ENCODE measurements at regions of chr11 and their contacts with region 1.

Region 1: GRCh38 chr11:31641477-31642062 is 132.0 kb downstream of the ELP4 start:
- DNase-seq: no peak
- H3K4me3 ChIP-seq: no peak overlapping the region
- H3K27ac ChIP-seq: no peak overlapping the region
- H3K4me1 ChIP-seq: peaks cover 14% of the 10 kb centered on the region
- H3K27me3 ChIP-seq: no peaks in the 10 kb centered on the region
- CTCF ChIP-seq: peak; percentile 71 to 76

Region 2: GRCh38 chr11:30830681-30831080 is 810.9 kb before region 1 on chr11:
- CTCF ChIA-PET with region 1: no interaction called
- dilution Hi-C with region 1: no loop called
- in situ Hi-C with region 1: no loop called
- intact Hi-C with region 1: no loop called
- DNase-seq: no peak
- H3K4me3 ChIP-seq: no peak overlapping the region
- H3K27ac ChIP-seq: no peak overlapping the region
- H3K4me1 ChIP-seq: no peaks in the 10 kb centered on the region
- H3K27me3 ChIP-seq: no peaks in the 10 kb centered on the region
- CTCF ChIP-seq: no peak

Region 3: GRCh38 chr11:31240338-31240904 is 401.1 kb before region 1 on chr11:
- CTCF ChIA-PET with region 1: no interaction called
- dilution Hi-C with region 1: no loop called
- in situ Hi-C with region 1: no loop called
- intact Hi-C with region 1: loop called (anchors 10 kb)
- DNase-seq: peak; percentile 29
- H3K4me3 ChIP-seq: no peak overlapping the region
- H3K27ac ChIP-seq: no peak overlapping the region
- H3K4me1 ChIP-seq: no peaks in the 10 kb centered on the region
- H3K27me3 ChIP-seq: no peaks in the 10 kb centered on the region
- CTCF ChIP-seq: peak; percentile 61 to 72

Region 4: GRCh38 chr11:31509429-31510345 is 131.9 kb before region 1 on chr11 and contains the starts of genes ELP4 and IMMP1L:
- CTCF ChIA-PET with region 1: no interaction called
- dilution Hi-C with region 1: no loop called
- in situ Hi-C with region 1: no loop called
- intact Hi-C with region 1: loop called (anchors 5 kb)
- DNase-seq: peak; percentile 95
- H3K4me3 ChIP-seq: peak within 1 kb of the TSS; percentile 89 to 96 (median 94)
- H3K27ac ChIP-seq: peak within 1 kb of the TSS; percentile 82
- H3K4me1 ChIP-seq: peaks cover 10% of the 10 kb centered on the region
- H3K27me3 ChIP-seq: no peaks in the 10 kb centered on the region
- CTCF ChIP-seq: no peak
- total RNA-seq, gene ELP4: 17.6 to 21.7 TPM
- total RNA-seq, gene IMMP1L: 17.2 to 22.1 TPM

Region 5: DNA sequence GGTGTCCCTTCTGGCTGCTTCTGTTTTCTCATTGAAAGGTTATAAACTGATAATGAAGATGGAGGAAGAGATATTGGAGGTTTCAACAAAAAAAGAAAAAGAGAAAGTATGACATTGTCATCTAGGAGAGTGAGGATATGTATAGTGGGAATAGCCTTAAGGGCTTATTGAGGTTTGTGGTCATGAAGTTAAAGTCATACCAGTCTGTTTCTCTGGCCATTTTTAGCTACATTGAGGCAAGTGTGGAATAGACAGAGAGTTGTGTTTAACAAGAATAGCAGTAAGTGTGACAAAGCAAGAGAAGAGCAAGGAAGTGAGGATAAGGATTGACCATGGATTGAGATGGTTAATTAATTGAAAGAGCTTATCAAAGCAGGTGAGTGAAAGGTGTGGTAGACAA is 21.6 kb before region 1 on chr11:
- CTCF ChIA-PET with region 1: no interaction called
- dilution Hi-C with region 1: no loop called
- in situ Hi-C with region 1: no loop called
- intact Hi-C with region 1: no loop called
- DNase-seq: no peak
- H3K4me3 ChIP-seq: no peak overlapping the region
- H3K27ac ChIP-seq: no peak overlapping the region
- H3K4me1 ChIP-seq: no peaks in the 10 kb centered on the region
- H3K27me3 ChIP-seq: no peaks in the 10 kb centered on the region
- CTCF ChIP-seq: no peak

Region 6: DNA sequence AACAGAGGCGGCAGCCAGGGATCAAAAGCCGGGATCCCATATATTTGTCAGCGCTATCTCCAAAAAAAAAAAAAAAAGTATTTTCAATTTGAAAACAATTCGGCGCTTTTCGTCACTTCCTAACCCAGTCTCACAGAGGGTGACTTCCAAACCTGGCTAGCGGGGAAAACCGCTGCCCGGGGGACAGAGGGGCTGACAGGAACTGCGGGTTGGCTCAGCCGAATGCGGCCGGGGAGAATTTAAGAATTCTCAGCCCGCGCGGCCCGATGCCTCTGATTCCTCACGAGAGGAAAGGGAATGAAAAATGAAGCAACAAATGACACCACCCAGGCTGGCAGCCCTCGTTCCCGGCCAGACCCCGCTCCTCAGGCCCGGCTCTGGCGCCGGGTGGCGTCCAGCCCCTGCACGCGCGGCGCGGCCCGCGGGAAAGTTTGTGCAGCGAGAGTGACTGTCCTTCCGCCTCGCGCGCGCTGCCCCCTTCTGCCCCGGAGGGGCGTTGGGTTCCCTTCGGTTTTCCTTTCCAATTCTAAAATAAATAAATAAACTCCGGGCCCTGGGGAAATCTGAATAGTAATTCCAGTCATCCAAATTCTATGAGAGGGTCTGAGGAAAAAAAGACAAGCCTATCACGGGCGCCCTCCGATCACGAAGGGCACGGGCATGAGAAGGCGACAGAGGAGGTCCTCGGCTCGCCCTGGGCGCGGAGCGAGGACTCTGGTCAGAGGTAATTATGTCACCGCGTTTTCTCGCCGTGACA is 174.3 kb after region 1 on chr11:
- CTCF ChIA-PET with region 1: no interaction called
- dilution Hi-C with region 1: no loop called
- in situ Hi-C with region 1: no loop called
- intact Hi-C with region 1: loop called (anchors 2 kb)
- DNase-seq: no peak
- H3K4me3 ChIP-seq: peak overlapping the region in 1 of 3 experiments; percentile 15
- H3K27ac ChIP-seq: no peak overlapping the region
- H3K4me1 ChIP-seq: peaks cover 39% of the 10 kb centered on the region
- H3K27me3 ChIP-seq: peaks cover 90% of the 10 kb centered on the region
- CTCF ChIP-seq: no peak

Region 7: DNA sequence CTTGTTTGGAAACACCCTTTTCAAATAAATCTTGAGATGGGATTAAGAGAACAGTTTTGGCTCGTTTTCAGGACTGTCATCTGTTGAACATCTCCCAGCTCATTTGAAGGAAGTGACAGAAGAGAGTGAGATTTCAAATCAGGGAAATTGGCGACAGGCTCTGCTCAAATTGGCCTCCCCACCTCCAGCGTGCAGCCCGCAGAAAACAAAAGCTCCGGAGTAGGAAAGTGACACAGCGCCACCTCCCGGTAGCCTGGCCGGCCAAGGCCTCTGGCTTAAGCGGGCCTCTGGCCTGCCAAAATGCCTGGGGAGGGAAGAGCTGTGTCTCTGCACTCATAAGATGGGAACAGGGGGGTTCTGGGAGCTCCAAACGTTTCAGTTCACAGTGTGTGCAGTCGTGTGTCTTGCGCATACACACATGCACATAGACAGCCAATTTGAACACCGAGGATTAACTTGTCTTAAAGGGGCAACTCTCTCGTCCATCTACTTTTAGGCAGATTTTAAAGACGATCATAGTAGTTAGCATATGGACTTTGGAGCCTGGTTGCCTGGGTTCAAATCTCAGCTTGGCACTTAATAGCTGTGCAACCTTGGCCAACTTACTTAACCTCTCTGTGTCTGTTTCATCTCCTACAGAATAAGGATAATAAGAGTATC is 316.6 kb after region 1 on chr11:
- CTCF ChIA-PET with region 1: no interaction called
- dilution Hi-C with region 1: no loop called
- in situ Hi-C with region 1: no loop called
- intact Hi-C with region 1: loop called (anchors 1 kb)
- DNase-seq: peak; percentile 37
- H3K4me3 ChIP-seq: no peak overlapping the region
- H3K27ac ChIP-seq: no peak overlapping the region
- H3K4me1 ChIP-seq: peaks cover 6% of the 10 kb centered on the region
- H3K27me3 ChIP-seq: no peaks in the 10 kb centered on the region
- CTCF ChIP-seq: peak; percentile 64 to 79

Region 8: DNA sequence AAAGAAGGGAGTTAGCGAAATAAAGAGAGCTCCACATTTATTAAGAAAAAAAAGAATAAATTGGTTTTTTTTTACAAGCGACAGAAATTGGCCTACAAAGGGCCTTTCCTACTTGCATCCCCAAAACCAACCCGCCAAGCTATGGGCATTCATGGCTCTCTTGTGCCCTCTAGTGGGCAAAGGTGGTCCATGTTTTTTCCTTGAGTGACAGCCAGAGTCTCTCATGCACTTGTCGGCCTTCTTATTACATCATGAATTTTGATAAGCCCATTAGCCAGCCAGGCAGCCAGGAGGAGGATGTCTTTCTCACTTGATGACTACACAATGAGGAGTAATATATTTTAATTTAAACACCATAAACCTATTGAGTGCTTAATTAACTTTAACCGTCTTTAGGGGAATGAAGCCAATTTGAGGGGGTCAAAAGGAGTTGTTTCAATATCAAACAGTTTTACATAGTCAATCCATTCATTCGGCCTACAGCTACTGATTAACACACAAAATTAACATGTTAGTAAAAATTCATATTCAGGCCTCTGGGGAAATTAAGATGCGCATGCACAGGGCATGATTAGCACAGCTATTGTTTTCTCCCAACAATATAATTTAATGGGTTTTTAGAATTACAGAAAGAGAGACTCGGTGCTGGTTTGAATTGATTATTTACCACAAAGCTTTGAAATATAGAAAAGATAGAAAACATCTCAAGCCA is 534.8 kb after region 1 on chr11:
- CTCF ChIA-PET with region 1: no interaction called
- dilution Hi-C with region 1: no loop called
- in situ Hi-C with region 1: no loop called
- intact Hi-C with region 1: loop called (anchors 1 kb)
- DNase-seq: peak; percentile 72
- H3K4me3 ChIP-seq: no peak overlapping the region
- H3K27ac ChIP-seq: no peak overlapping the region
- H3K4me1 ChIP-seq: peaks cover 4% of the 10 kb centered on the region
- H3K27me3 ChIP-seq: peaks cover 2% of the 10 kb centered on the region
- CTCF ChIP-seq: peak; percentile 88 to 89